ENCODE measurements at regions of chr22 and their contacts with region 1.

Region 1: DNA sequence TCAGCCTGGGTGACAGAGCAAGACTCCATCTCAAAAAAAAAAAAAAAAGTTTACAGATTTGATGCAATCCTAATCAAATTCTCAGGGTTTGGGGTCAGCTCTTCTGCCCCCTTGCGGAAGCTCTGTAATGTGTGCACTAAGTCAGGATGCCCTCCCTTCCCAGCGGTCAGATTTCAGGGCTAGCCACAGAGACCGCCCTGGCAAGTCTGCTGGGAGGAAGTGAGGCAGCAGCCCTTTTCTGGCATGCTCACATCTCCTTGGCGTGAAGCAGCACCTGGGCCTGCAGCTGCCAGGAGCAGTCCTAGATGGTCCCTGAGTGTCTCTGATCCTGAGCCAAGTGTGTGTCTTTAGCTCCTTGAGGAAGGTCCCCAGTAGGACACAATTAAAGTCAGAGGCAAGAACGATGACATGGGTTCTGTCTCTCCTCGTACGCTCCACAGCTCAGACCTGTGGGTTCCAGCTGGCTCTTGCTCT is 10.9 kb upstream of the APOBEC3C start:
- DNase-seq: peak; percentile 90

Region 2: DNA sequence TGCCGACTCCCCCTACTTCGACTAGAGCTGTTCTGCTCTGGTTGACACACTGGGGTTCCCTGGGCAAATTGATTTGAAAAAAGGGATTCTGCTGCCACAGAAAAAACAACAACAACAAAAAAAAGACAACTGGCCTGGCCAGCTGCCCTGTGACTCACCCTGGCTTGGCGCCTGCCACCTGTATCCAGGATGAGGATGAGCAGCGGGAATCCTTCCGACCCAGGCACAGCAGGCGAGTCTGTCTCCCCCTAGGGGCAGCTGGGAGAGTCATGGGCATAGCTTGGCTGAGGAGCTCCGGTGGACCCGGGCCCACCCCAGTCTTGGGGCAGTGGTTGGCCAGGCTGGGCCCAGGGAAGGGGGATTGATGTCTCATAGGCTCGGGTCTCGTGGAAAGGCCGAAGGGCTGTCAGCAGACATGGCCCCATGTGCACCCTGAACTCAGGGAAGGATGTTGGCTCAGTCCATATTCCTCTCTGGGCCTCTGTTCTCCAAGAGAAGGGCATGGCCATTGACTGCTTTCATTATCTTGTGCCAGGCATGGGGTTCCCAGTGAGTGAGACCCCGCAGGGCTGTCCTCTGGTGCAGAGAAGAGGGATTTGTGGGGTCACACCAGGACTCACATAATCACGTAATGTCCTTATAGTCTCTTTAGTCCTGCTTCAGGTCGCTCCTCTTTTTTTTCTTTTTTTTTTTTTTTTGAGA is 237.0 kb before region 1 on chr22:
- intact Hi-C with region 1: loop called (anchors 5 to 10 kb)
- DNase-seq: no peak

Region 3: DNA sequence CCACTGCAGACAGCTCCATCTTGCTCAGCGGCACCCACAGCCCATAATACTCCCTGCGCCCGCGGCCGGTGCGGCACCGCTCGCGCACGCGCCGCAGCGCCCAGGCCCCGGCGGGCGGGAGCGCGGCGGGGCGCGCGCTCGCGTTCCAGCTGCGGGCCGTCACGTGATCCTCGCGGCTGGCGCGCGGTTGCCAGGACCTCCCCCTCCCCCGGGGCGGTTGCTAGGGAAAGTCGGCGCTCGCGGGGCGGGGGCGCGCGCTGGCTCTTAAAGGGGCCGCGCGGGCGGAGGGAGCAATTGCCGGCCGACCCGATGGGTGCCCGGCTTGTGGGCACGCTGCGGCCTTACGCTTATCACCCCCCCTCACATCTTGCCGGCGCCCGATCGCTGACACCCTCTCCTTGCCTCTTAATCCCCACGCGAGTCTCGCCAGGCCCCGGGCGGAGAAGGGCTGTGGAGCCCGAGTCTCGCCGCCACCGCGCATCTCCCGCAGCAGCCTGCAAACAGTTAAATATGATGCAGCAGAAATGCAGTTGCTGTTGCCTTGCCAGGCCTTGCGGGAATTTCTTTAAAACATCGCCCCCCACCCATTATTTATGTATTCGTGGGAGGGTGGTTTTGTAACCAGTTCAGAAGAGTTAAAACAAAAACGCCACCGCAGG is 130.9 kb before region 1 on chr22 and contains the start of gene CBX6:
- intact Hi-C with region 1: loop called in 1 of 2 experiments (anchors 5 kb)
- DNase-seq: peak; percentile 98
- total RNA-seq, gene CBX6: 98.0 to 105 TPM

Region 4: DNA sequence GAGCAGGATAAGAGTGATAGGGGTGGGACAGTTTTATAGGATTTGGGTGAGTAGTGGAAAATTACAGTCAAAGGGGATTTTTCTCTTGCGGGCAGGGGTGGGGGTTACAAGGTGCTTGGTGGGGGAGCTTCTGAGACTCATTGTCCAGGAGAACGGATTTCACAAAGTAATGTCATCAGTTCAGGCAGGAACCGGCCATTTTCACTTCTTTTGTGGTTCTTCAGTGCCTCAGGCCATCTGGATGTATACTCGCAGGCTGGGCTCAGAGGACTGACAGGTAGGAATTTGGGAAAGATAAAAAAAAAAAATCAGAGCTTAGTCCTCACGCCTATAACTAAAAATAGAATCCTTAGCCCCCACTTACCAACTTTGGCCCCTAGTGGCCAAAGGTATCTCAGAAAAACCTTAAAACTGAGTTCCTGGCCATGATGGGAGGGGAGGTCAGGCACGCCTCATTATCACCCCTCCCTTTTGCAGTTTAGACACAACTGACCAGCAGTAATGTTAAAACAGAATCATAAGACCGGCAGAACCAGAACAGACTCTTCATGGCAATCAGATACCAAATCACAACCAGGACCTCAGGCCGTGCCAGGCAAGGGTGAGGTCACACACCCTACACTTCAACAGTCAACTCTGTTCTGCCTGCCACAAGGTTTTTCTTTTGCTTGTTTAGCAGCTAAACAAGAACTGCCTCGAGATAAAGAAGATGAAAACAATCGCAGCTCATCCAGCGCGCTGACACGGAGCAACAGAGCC is 65.0 kb after region 1 on chr22:
- intact Hi-C with region 1: loop called in 1 of 2 experiments (anchors 2 kb)
- DNase-seq: no peak

Region 5: GRCh38 chr22:39123751-39124601 is 120.8 kb after region 1 on chr22:
- intact Hi-C with region 1: loop called in 1 of 2 experiments (anchors 10 kb)
- DNase-seq: peak; percentile 73

Measured in posterior vena cava (tissue), 2 donors.